PC-9 (cell line): ENCODE measurements at regions of chr7 and their contacts with region 1.

Region 1: GRCh38 chr7:40008223-40008815 is 58.3 kb downstream of the CDK13 start:
- DNase-seq: no peak
- H3K4me3 ChIP-seq: no peak overlapping the region
- H3K27ac ChIP-seq: 0 out of 2 replicates have a peak overlapping the region, but pooled peaks have one; percentile 2
- H3K4me1 ChIP-seq: no peaks in the 10 kb centered on the region
- H3K27me3 ChIP-seq: no peaks in the 10 kb centered on the region
- CTCF ChIP-seq: no peak

Region 2: GRCh38 chr7:39566023-39566921 is 442.0 kb before region 1 on chr7 and contains the start of gene YAE1:
- CTCF ChIA-PET with region 1: no interaction called
- POLR2A ChIA-PET with region 1: interaction called, 11 read pairs
- intact Hi-C with region 1: no loop called
- DNase-seq: peak; percentile 55 to 78
- H3K4me3 ChIP-seq: peak within 1 kb of the TSS; percentile 90
- H3K27ac ChIP-seq: peak within 1 kb of the TSS; percentile 20
- H3K4me1 ChIP-seq: peaks cover 18% of the 10 kb centered on the region
- H3K27me3 ChIP-seq: no peaks in the 10 kb centered on the region
- CTCF ChIP-seq: no peak
- total RNA-seq, gene YAE1: 22.3 and 23.1 TPM in 2 replicates

Region 3: GRCh38 chr7:39855325-39855674 is 153.0 kb before region 1 on chr7:
- CTCF ChIA-PET with region 1: no interaction called
- POLR2A ChIA-PET with region 1: no interaction called
- intact Hi-C with region 1: no loop called
- DNase-seq: no peak
- H3K4me3 ChIP-seq: no peak overlapping the region
- H3K27ac ChIP-seq: no peak overlapping the region
- H3K4me1 ChIP-seq: no peaks in the 10 kb centered on the region
- H3K27me3 ChIP-seq: no peaks in the 10 kb centered on the region
- CTCF ChIP-seq: no peak

Region 4: DNA sequence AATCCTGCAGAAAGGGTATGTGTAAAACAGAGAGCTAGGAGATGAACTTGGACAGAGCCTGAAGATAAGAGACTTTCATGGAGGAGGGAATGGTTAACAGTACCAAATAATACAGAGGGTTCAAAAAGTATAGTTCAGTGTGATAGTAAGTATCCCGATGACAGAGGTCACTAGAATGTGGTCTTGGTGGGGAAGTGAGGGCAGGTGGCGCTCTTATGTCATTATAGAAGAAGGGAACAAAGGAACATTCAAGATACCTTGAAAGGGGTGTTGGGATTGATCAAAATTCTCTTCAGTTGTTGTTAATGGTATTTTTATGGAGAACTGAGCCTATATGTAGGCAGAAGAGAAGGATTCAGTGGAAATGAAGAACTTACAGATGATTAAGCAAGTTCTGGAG is 439.0 kb after region 1 on chr7:
- CTCF ChIA-PET with region 1: no interaction called
- POLR2A ChIA-PET with region 1: interaction called, 11 read pairs
- intact Hi-C with region 1: no loop called
- DNase-seq: no peak
- H3K4me3 ChIP-seq: no peak overlapping the region
- H3K27ac ChIP-seq: no peak overlapping the region
- H3K4me1 ChIP-seq: no peaks in the 10 kb centered on the region
- H3K27me3 ChIP-seq: no peaks in the 10 kb centered on the region
- CTCF ChIP-seq: 0 out of 2 replicates have a peak, but pooled peaks have one; percentile 27